Testis (tissue), 5 donors: ENCODE measurements at regions of chr14 and their contacts with region 1.

Region 1: DNA sequence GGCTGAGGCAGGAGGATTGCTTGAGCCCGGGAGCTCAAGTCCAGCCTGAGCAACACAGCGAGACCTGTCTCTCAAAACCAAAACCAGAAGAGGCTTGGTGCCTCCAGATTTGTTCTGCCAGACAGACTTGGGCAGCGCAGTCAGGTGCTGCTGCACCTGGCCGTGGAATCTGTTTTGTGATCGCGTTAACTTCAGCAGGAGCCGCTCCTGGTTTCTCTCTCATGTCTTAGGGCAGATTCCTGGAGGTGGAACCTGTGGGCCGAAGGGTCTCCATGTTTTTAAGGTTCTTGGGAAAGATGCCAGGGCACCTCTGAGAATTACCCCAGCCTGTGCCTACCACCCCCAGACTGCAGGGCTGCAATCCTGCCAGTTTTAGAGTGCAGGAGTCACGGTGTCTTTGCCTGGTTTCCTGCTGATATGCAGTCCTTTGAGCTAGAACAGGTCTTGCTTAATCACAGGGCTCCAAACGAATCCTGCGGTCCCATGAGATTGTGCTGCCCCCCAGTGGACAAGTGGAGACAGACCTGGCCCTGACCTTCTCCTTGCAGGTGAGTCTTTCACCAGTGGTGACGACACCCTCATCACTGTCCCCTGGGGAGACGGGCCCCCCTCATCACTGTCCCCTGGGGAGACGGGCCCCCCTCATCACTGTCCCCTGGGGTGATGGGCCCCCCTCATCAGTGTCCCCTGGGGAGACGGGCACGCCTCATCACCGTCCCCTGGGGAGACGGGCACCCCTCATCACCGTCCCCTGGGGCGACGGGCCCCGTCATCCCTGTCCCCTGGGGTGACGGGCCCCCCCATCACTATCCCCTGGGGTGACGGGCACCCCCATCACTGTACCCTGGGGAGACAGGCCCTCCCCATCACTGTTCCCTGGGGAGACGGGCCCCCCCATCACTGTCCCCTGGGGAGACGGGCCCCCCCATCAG is 37.6 kb downstream of the PACS2 start:
- DNase-seq: peak; percentile 85
- H3K4me3 ChIP-seq: no peak overlapping the region
- H3K27ac ChIP-seq: no peak overlapping the region
- H3K4me1 ChIP-seq: no peaks in the 10 kb centered on the region
- H3K27me3 ChIP-seq: no peaks in the 10 kb centered on the region
- CTCF ChIP-seq: peak; percentile 56 to 85 (median 71)
- POLR2A ChIP-seq: no peak

Region 2: GRCh38 chr14:105090493-105091053 is 261.6 kb before region 1 on chr14:
- intact Hi-C with region 1: loop called (anchors 10 kb)
- DNase-seq: peak; percentile 86
- H3K4me3 ChIP-seq: no peak overlapping the region
- H3K27ac ChIP-seq: no peak overlapping the region
- H3K4me1 ChIP-seq: peaks cover 40% of the 10 kb centered on the region
- H3K27me3 ChIP-seq: no peaks in the 10 kb centered on the region
- CTCF ChIP-seq: peak; percentile 75 to 93 (median 80)
- POLR2A ChIP-seq: no peak

Region 3: GRCh38 chr14:105389976-105390848 is 38.0 kb after region 1 on chr14:
- intact Hi-C with region 1: no loop called
- DNase-seq: no peak
- H3K4me3 ChIP-seq: no peak overlapping the region
- H3K27ac ChIP-seq: peak overlapping the region in 1 of 2 donors; percentile 2
- H3K4me1 ChIP-seq: no peaks in the 10 kb centered on the region
- H3K27me3 ChIP-seq: no peaks in the 10 kb centered on the region
- CTCF ChIP-seq: no peak
- POLR2A ChIP-seq: no peak